ACHN (cell line): ENCODE measurements at regions of chr1 and their contacts with region 1.

Region 1: DNA sequence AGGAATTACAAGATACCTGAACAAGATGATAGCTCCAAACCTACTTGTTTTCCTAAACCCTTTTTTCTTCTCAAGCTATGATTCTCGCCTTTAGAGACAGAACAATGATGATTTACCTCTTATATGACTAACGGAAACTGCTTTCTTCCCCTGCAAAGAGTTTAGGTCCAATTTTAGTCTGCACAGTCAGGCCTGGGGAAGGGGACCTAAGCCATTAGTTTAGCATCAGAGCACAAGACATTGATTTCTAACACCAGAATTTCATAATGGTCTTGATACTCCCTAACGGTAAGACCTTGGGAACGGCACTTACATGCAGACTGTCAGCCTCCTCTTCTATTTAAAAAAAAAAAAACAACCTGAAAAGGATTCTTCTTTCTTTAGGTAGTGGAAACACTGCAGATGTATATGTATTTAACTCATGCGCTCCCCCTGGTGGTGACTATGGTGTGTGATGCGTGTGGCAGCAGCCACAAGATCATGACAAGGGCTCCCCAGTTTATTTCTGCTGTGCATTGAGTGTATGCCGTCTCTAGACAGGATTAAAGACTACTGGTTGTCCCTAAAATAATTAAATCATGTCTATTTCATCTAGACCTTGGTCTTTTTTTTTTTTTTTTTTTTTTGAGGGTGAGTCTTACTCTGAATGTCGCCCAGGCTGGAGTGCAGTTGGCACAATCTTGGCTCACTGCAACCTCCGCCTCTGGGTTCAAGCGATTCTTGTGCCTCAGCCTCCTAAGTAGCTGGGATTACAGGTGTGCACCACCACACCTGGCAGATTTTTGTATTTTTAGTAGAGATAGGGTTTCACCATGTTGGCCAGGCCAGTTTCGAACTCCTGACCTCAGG is 37.3 kb upstream of the TMEM222 start:
- DNase-seq: peak; percentile 66

Region 2: DNA sequence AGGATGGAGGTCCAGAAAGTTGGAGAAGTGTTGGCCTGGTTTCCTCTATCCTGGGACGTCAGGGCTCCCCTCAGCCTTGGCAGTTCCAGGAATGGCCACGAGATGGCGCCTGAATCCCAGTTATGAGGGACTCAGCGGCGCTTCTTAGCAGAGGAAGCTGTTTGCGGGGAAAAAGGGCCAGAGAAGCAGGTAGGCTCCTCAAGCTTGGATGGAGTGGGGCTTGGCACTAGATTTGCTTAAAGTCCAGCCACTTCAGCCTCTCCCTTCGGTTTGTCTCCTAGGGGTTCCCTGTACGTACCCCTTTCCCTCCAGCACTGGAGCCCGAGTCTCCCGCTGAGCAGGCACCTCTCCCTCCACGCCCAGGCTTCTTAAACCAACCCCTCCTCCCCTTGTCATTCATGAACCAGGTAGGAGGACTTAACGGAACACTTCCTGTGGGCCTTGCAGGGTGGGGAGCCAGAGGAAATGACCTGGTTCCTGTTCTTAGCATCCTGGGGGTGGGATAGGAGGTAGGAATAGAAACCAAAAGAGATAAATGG is 240.0 kb before region 1 on chr1:
- in situ Hi-C with region 1: loop called (anchors 25 kb)
- DNase-seq: peak; percentile 75

Region 3: DNA sequence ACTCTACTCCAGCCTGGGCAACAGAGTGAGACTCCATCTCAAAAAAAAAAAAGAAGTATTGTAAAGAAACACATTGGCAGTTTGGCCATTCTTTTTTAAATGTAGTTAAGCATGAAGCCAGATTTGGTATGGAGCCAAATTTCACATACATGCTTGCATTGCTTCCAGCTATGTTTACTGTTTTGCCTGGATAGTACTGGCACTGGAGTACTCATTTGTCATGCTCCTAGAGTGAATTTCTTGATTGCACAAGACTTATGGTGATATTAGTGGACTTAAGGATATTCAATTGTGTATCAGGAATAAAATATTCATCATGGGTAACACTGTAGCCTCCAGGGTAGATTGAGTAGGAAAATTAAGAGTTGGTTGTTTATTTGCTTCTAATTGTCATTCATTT is 105.3 kb before region 1 on chr1:
- in situ Hi-C with region 1: no loop called
- DNase-seq: no peak

Region 4: GRCh38 chr1:27192039-27192529 is 92.6 kb before region 1 on chr1:
- in situ Hi-C with region 1: no loop called
- DNase-seq: no peak